CD4-positive, alpha-beta memory T cell (primary cell): ENCODE measurements at regions of chr19 and their contacts with region 1.

Region 1: DNA sequence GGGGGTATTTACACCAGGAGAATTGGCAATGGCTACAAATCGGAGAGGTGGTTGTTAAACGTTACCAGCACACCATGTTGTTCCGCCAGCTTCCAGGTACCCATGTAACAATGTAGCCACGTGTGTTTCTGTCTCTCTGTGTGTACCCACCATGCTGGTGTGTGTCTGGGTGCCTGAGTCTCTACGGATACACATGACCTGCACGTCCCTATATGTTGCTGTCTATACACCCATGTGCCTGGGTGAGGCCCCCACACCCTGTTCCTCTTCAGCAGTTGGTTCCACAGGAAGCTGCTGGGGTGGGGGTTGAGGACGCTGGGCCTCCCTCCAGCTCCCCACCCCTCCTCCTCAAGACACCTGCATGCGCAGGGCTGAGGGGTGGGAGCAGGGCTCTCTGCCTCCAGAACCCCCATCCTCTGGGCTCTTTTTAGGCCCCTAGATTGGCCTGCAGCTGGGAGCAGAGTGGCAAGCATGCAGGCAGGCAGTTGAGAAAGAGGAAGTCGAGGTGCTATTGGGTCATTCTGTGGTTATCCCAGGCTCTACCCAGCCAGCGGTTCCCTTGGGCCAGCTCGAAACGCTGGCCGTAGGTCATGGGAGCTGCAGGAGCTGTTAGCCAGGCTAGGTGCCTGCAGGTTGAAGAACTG is at the start of gene ARHGEF18:
- DNase-seq: peak; percentile 62 to 75 (median 71)
- H3K4me3 ChIP-seq: peak within 1 kb of the TSS; percentile 96 to 100
- H3K4me3 Mint-ChIP-seq: peak within 1 kb of the TSS; percentile 93 to 100 (median 98)
- H3K27ac ChIP-seq: peak within 1 kb of the TSS; percentile 74
- H3K27ac Mint-ChIP-seq: peak within 1 kb of the TSS; percentile 89 to 99 (median 95)
- H3K4me1 ChIP-seq: peaks cover 77% of the 10 kb centered on the region
- H3K4me1 Mint-ChIP-seq: peaks cover 39 to 81% (median 58%) of the 10 kb centered on the region in 4 donors
- H3K27me3 ChIP-seq: no peaks in the 10 kb centered on the region
- H3K27me3 Mint-ChIP-seq: no peaks in the 10 kb centered on the region
- total RNA-seq, gene ARHGEF18: 82.3 to 83.8 TPM

Region 2: GRCh38 chr19:7069042-7069903 is 279.4 kb before region 1 on chr19 and contains the start of gene ZNF557:
- CTCF ChIA-PET with region 1: no interaction called
- POLR2A ChIA-PET with region 1: interaction called, 16 read pairs
- intact Hi-C with region 1: no loop called
- DNase-seq: peak; percentile 99 to 100 (median 99)
- H3K4me3 ChIP-seq: peak within 1 kb of the TSS; percentile 92 to 96
- H3K4me3 Mint-ChIP-seq: peak within 1 kb of the TSS; percentile 92 to 99 (median 96)
- H3K27ac ChIP-seq: peak within 1 kb of the TSS; percentile 74
- H3K27ac Mint-ChIP-seq: peak within 1 kb of the TSS; percentile 89 to 98 (median 95)
- H3K4me1 ChIP-seq: peaks cover 21% of the 10 kb centered on the region
- H3K4me1 Mint-ChIP-seq: peaks cover 11 to 36% (median 18%) of the 10 kb centered on the region in 4 donors
- H3K27me3 ChIP-seq: no peaks in the 10 kb centered on the region
- H3K27me3 Mint-ChIP-seq: no peaks in the 10 kb centered on the region
- total RNA-seq, gene ZNF557: 32.3 to 33.2 TPM

Region 3: DNA sequence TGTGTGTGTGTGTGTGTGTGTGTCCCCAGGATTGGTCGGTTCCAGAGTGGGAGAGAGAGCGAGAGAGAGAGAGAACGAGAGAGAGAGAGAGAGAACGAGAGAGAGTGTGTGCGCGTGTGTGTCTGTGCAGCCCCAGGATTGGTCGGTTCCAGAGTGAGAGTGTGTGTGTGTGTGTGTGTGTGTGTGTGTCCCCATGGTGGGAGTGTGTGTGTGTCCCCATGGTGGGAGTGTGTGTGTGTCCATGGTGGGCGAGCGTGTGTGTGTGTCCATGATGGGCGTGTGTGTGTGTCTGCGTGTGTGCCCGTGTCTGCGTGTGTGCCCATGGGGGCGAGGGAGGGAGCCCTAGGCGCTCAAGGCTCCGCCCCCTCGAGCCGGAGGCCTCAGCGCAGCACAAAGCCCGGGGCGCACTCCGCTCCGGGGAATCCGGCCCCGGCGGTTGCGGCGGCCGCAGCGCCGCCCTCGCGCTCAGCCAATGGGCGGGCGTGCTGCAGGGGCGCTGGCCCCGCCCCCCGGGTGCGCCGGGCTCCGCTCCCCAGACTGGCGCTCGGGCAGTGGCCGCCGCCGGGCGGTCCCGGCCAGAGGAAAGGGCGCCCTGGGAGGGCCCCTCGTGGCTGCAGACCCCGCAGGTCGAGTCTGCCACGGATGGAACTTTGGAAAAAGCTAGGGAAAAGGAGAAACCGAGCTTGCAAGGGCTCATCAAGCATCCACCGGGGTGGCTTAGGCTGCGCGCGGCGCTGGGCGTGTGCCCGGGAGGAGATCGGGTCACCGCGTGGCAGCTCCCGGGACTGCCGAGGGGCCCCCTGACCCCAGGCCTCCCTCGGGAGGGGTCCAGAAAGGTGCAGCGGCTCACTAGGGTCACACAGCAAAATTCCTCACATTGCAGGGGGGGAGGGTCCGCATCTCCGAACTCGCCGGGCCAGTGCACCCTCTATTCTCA is 150.7 kb before region 1 on chr19:
- CTCF ChIA-PET with region 1: interaction called, 3 read pairs
- POLR2A ChIA-PET with region 1: interaction called, 6 read pairs
- intact Hi-C with region 1: loop called (anchors 5 kb)
- DNase-seq: peak; percentile 91 to 94 (median 93)
- H3K4me3 ChIP-seq: peak overlapping the region; percentile 65 to 86
- H3K4me3 Mint-ChIP-seq: peak overlapping the region; percentile 85 to 99 (median 92)
- H3K27ac ChIP-seq: peak overlapping the region; percentile 61
- H3K27ac Mint-ChIP-seq: peak overlapping the region; percentile 96 to 100 (median 98)
- H3K4me1 ChIP-seq: peaks cover 21% of the 10 kb centered on the region
- H3K4me1 Mint-ChIP-seq: peaks cover 4 to 19% (median 12%) of the 10 kb centered on the region in 4 donors
- H3K27me3 ChIP-seq: peaks cover 6% of the 10 kb centered on the region
- H3K27me3 Mint-ChIP-seq: peaks cover 9 to 15% of the 10 kb centered on the region in 2 donors

Region 4: GRCh38 chr19:7214007-7214811 is 134.5 kb before region 1 on chr19:
- CTCF ChIA-PET with region 1: no interaction called
- POLR2A ChIA-PET with region 1: no interaction called
- intact Hi-C with region 1: no loop called
- DNase-seq: no peak
- H3K4me3 ChIP-seq: no peak overlapping the region
- H3K4me3 Mint-ChIP-seq: no peak overlapping the region
- H3K27ac ChIP-seq: no peak overlapping the region
- H3K27ac Mint-ChIP-seq: no peak overlapping the region
- H3K4me1 ChIP-seq: no peaks in the 10 kb centered on the region
- H3K4me1 Mint-ChIP-seq: peaks cover 2 to 6% (median 3%) of the 10 kb centered on the region in 4 donors
- H3K27me3 ChIP-seq: no peaks in the 10 kb centered on the region
- H3K27me3 Mint-ChIP-seq: peaks cover 5 to 14% of the 10 kb centered on the region in 2 donors

Region 5: GRCh38 chr19:7293795-7294570 is 54.7 kb before region 1 on chr19 and contains the start of gene INSR:
- CTCF ChIA-PET with region 1: no interaction called
- POLR2A ChIA-PET with region 1: no interaction called
- intact Hi-C with region 1: no loop called
- DNase-seq: peak in 4 of 5 donors; percentile 2 to 53 (median 6)
- H3K4me3 ChIP-seq: no peak within 1 kb of the TSS
- H3K4me3 Mint-ChIP-seq: peak within 1 kb of the TSS; percentile 57 to 82 (median 72)
- H3K27ac ChIP-seq: no peak within 1 kb of the TSS
- H3K27ac Mint-ChIP-seq: peak within 1 kb of the TSS in 1 of 7 donors; percentile 43
- H3K4me1 ChIP-seq: peaks cover 10% of the 10 kb centered on the region
- H3K4me1 Mint-ChIP-seq: peaks cover 2 to 15% (median 7%) of the 10 kb centered on the region in 4 donors
- H3K27me3 ChIP-seq: no peaks in the 10 kb centered on the region
- H3K27me3 Mint-ChIP-seq: peaks cover 18 to 32% of the 10 kb centered on the region in 2 donors
- total RNA-seq, gene INSR: 1.2 to 2.2 TPM

Region 6: GRCh38 chr19:7360393-7360984 is 11.8 kb after region 1 on chr19:
- CTCF ChIA-PET with region 1: interaction called, 123 read pairs
- POLR2A ChIA-PET with region 1: interaction called, 50 read pairs
- intact Hi-C with region 1: no loop called
- DNase-seq: no peak
- H3K4me3 ChIP-seq: no peak overlapping the region
- H3K4me3 Mint-ChIP-seq: no peak overlapping the region
- H3K27ac ChIP-seq: no peak overlapping the region
- H3K27ac Mint-ChIP-seq: peak overlapping the region in 5 of 7 donors; percentile 17 to 73 (median 52)
- H3K4me1 ChIP-seq: peaks cover 56% of the 10 kb centered on the region
- H3K4me1 Mint-ChIP-seq: peaks cover 44 to 87% (median 53%) of the 10 kb centered on the region in 4 donors
- H3K27me3 ChIP-seq: no peaks in the 10 kb centered on the region
- H3K27me3 Mint-ChIP-seq: no peaks in the 10 kb centered on the region

Region 7: DNA sequence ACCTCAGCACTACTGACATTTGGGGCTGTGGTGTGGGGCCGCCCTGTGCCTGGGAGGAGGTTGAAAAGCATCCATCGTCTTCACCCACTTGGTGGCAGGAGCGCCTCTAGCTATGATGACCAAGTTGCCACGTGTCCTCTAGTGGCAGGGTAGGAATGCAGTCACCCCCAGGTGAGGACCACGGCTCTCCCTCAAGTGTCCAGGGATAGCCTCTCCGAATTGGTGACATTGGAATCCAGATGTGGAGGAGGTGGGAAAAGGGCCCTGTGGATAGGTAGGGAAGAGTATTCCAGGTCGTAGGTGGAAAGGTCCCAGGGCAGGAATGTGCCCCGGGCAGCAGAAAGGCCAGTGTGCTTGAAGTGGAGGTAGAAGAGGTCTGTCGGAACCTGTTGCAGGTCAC is 37.6 kb after region 1 on chr19:
- CTCF ChIA-PET with region 1: interaction called, 20 read pairs
- POLR2A ChIA-PET with region 1: interaction called, 13 read pairs
- intact Hi-C with region 1: loop called (anchors 5 kb)
- DNase-seq: no peak
- H3K4me3 ChIP-seq: no peak overlapping the region
- H3K4me3 Mint-ChIP-seq: peak overlapping the region in 5 of 8 donors; percentile 17 to 70 (median 30)
- H3K27ac ChIP-seq: no peak overlapping the region
- H3K27ac Mint-ChIP-seq: peak overlapping the region; percentile 50 to 88 (median 83)
- H3K4me1 ChIP-seq: peaks cover 43% of the 10 kb centered on the region
- H3K4me1 Mint-ChIP-seq: peaks cover 21 to 49% (median 22%) of the 10 kb centered on the region in 4 donors
- H3K27me3 ChIP-seq: no peaks in the 10 kb centered on the region
- H3K27me3 Mint-ChIP-seq: no peaks in the 10 kb centered on the region